ENCODE measurements at regions of chr11 and their contacts with region 1.

Region 1: GRCh38 chr11:57758174-57758573 is 3.4 kb upstream of the CTNND1 start:
- DNase-seq: no peak
- H3K4me3 ChIP-seq: no peak overlapping the region
- H3K27ac ChIP-seq: no peak overlapping the region
- H3K4me1 ChIP-seq: no peaks in the 10 kb centered on the region
- H3K27me3 ChIP-seq: no peaks in the 10 kb centered on the region
- CTCF ChIP-seq: no peak

Region 2: GRCh38 chr11:57345555-57346211 is 412.5 kb before region 1 on chr11:
- intact Hi-C with region 1: no loop called
- DNase-seq: peak in 4 of 5 donors; percentile 66 to 83 (median 78)
- H3K4me3 ChIP-seq: no peak overlapping the region
- H3K27ac ChIP-seq: no peak overlapping the region
- H3K4me1 ChIP-seq: no peaks in the 10 kb centered on the region
- H3K27me3 ChIP-seq: no peaks in the 10 kb centered on the region
- CTCF ChIP-seq: peak; percentile 76

Region 3: GRCh38 chr11:57499413-57499982 is 258.7 kb before region 1 on chr11:
- intact Hi-C with region 1: no loop called
- DNase-seq: peak; percentile 95 to 98 (median 96)
- H3K4me3 ChIP-seq: peak overlapping the region; percentile 31 to 55 (median 38)
- H3K27ac ChIP-seq: peak overlapping the region; percentile 58 to 80
- H3K4me1 ChIP-seq: peaks cover 0 to 16% (median 12%) of the 10 kb centered on the region in 3 donors
- H3K27me3 ChIP-seq: no peaks in the 10 kb centered on the region
- CTCF ChIP-seq: no peak

Region 4: DNA sequence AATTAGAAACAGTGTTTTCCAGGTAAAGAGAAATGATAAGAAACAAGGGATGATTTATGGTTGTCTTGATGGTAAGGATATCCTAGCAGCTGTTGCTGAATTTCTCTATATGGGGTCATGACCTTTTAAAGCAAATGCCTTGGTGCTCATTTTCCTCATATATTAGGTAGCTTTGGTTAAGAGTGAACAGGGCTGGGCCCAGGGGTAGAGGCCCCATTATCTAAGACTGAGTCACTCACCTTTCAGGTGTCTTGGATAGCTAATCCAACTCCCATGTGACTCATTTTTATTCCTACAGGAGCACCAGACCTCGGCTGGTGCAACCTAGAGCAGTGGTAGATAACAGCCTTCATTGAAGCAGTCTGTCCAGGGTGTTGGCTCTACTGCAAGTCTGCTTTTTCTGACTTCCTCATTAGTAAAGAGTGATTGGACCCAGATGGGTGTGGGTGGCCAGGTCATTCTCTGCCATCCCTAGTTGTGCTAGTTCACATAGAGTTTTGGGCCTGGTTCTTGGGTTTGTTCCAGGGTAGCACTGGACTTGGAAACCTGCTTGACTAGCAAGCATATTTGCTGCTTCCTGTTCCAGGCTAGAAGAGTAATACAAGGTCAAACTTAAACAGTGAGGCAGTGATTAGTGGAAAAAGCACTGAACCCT is 40.9 kb after region 1 on chr11:
- intact Hi-C with region 1: loop called (anchors 5 kb)
- DNase-seq: peak in 2 of 5 donors; percentile 61 to 86
- H3K4me3 ChIP-seq: no peak overlapping the region
- H3K27ac ChIP-seq: peak overlapping the region; percentile 13 to 84
- H3K4me1 ChIP-seq: peaks cover 0 to 32% (median 27%) of the 10 kb centered on the region in 3 donors
- H3K27me3 ChIP-seq: no peaks in the 10 kb centered on the region
- CTCF ChIP-seq: no peak